ENCODE measurements at regions of chr1 and their contacts with region 1.

Region 1: GRCh38 chr1:89454845-89455521 is 69.6 kb upstream of the LRRC8B start:
- DNase-seq: no peak
- ATAC-seq: peak; percentile 79
- H3K4me3 Mint-ChIP-seq: no peak overlapping the region
- H3K27ac Mint-ChIP-seq: no peak overlapping the region
- H3K4me1 Mint-ChIP-seq: no peaks in the 10 kb centered on the region
- H3K27me3 Mint-ChIP-seq: peaks cover 2% of the 10 kb centered on the region
- CTCF ChIP-seq: peak; percentile 41

Region 2: DNA sequence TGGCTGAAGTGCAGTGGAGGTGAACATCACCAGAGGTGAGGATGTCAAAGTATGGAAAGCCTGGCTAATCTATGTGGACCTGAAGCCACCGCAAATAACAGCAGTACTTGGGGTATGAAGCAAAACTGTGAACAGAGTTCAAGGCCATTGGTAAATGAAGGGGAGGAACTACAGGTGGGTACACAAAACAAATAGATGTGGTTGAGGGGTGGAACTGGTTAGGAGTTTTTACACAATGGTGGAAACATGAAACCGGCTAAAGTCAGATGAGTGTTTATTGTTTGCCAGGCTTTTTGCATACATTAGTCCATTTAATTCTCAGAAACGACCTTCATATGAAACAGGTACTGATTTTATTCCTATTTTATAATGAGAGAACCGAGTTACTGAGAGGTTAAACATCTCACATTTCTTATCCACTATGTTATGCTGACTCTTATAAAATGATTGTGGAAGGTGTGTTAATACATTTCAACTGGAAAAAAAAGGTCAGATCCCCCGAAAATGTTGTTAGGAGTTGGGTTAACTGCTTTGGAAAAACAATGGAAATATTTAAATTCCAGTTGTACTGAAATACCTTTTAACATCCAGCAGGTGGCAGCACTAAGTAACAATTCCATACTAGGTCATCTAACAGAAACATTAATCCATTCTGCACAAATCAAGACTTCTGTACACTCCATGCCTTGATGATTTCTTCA is 519.3 kb before region 1 on chr1:
- CTCF ChIA-PET with region 1: no interaction called
- POLR2A ChIA-PET with region 1: no interaction called
- intact Hi-C with region 1: loop called (anchors 1 kb)
- DNase-seq: no peak
- ATAC-seq: peak; percentile 50
- H3K4me3 Mint-ChIP-seq: no peak overlapping the region
- H3K27ac Mint-ChIP-seq: no peak overlapping the region
- H3K4me1 Mint-ChIP-seq: peaks cover 3% of the 10 kb centered on the region
- H3K27me3 Mint-ChIP-seq: no peaks in the 10 kb centered on the region
- CTCF ChIP-seq: no peak

Region 3: GRCh38 chr1:88973520-88974137 is 481.4 kb before region 1 on chr1:
- CTCF ChIA-PET with region 1: interaction called, 14 read pairs
- POLR2A ChIA-PET with region 1: no interaction called
- intact Hi-C with region 1: loop called (anchors 1 kb)
- DNase-seq: no peak
- ATAC-seq: no peak
- H3K4me3 Mint-ChIP-seq: no peak overlapping the region
- H3K27ac Mint-ChIP-seq: no peak overlapping the region
- H3K4me1 Mint-ChIP-seq: peaks cover 20% of the 10 kb centered on the region
- H3K27me3 Mint-ChIP-seq: no peaks in the 10 kb centered on the region
- CTCF ChIP-seq: peak; percentile 77

Region 4: GRCh38 chr1:88983791-88984559 is 471.0 kb before region 1 on chr1:
- CTCF ChIA-PET with region 1: interaction called, 10 read pairs
- POLR2A ChIA-PET with region 1: no interaction called
- intact Hi-C with region 1: no loop called
- DNase-seq: no peak
- ATAC-seq: peak; percentile 84
- H3K4me3 Mint-ChIP-seq: peak overlapping the region; percentile 29
- H3K27ac Mint-ChIP-seq: peak overlapping the region; percentile 56
- H3K4me1 Mint-ChIP-seq: peaks cover 62% of the 10 kb centered on the region
- H3K27me3 Mint-ChIP-seq: no peaks in the 10 kb centered on the region
- CTCF ChIP-seq: no peak

Region 5: DNA sequence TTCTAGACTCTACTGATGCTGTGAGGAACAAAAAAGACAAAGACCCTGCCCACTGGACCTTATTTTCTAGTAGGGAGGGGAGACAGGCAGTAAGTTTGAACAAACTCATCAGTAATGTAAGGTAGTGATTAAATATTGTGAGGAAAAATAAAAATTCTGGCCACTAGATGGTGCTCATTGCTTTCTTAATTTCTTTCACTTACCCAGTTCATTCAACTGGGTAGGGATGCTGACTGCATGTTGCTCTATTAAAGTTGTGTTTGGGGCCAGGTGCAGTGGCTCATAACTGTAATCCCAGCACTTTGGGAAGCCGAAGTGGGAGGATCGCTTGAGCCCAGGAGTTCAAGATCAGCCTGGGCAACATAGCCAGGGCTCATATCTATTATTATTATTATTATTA is 456.3 kb before region 1 on chr1:
- CTCF ChIA-PET with region 1: interaction called, 5 read pairs
- POLR2A ChIA-PET with region 1: no interaction called
- intact Hi-C with region 1: loop called (anchors 1 kb)
- DNase-seq: no peak
- ATAC-seq: peak; percentile 88
- H3K4me3 Mint-ChIP-seq: no peak overlapping the region
- H3K27ac Mint-ChIP-seq: no peak overlapping the region
- H3K4me1 Mint-ChIP-seq: peaks cover 6% of the 10 kb centered on the region
- H3K27me3 Mint-ChIP-seq: no peaks in the 10 kb centered on the region
- CTCF ChIP-seq: no peak

Region 6: DNA sequence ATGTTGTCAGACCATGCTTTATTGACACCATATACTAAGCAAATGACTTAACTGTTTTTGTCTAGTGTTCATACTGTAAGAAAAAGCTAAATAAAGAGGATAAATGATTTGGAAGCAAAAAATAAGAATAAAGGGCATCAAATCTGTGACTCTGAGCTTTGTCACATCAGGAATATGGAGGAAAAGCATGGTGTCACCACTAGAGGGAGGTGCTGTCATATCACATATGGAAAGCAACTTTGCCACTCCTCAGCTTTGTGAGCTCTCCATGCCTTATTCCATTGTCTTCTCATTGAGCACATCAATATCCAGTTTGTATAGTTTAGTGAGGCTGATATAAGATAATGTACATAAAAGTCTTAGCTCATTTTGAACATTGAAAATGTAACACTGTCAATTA is 369.2 kb before region 1 on chr1:
- CTCF ChIA-PET with region 1: interaction called, 6 read pairs
- POLR2A ChIA-PET with region 1: interaction called, 3 read pairs
- intact Hi-C with region 1: loop called (anchors 1 kb)
- DNase-seq: no peak
- ATAC-seq: peak; percentile 37
- H3K4me3 Mint-ChIP-seq: no peak overlapping the region
- H3K27ac Mint-ChIP-seq: no peak overlapping the region
- H3K4me1 Mint-ChIP-seq: peaks cover 4% of the 10 kb centered on the region
- H3K27me3 Mint-ChIP-seq: no peaks in the 10 kb centered on the region
- CTCF ChIP-seq: no peak

Region 7: DNA sequence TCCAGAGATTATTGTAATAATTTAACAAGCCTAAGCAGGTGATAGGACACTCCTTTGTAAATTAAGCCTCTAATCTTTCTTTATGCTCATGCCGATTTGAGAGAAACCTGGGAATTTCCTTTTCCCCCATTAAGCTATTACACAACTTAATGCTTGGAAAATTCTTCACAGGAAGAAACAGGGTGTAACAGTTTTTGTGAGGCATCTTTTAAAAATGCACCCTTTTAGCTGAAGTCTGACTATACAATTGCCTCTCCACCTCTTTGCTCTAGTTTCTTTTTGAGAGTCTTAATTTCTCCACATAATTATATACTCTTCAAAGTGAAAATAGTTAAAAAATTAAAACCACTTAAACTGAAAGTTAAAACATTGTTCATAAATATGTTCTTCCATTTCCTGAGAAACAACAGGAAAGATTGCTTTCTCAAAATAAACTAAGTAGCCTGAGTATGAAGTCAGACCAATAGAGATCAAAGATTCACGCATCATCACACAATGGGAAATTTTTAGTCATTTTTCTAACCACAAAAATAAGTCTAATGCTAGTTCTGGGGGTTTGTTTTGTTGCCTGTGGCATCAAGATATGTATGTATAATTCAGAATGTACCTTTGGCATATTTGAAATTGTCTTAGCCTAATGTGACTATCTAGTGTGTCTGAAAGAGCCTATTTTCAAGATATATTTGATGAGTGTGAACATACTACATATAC is 400.6 kb after region 1 on chr1:
- CTCF ChIA-PET with region 1: no interaction called
- POLR2A ChIA-PET with region 1: no interaction called
- intact Hi-C with region 1: no loop called
- DNase-seq: no peak
- ATAC-seq: peak; percentile 89
- H3K4me3 Mint-ChIP-seq: peak overlapping the region; percentile 61
- H3K27ac Mint-ChIP-seq: no peak overlapping the region
- H3K4me1 Mint-ChIP-seq: peaks cover 2% of the 10 kb centered on the region
- H3K27me3 Mint-ChIP-seq: no peaks in the 10 kb centered on the region
- CTCF ChIP-seq: no peak